Mucosa of descending colon (tissue), 3 donors: ENCODE measurements at regions of chr18 and their contacts with region 1.

Region 1: DNA sequence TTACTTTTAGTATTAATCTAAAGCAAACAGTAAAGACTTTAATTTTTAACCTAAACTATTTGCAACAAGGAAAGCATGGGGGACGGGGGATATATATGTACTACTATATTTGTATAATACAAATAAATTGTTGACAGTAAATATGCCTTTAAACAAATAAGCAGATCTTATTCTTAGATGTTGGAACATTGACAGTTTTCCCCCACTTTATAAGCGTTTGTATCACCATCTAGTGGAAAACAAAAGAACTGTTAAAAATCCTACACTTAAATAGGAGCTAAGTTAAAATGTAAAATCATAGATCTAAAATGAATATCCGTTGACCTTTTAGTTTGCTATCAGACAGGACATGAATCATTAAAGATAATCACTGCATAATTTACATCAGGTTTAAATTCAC is 50.0 kb downstream of the RBBP8 start:
- DNase-seq: no peak
- ATAC-seq: no peak
- H3K4me3 ChIP-seq: no peak overlapping the region
- H3K4me1 ChIP-seq: no peaks in the 10 kb centered on the region
- CTCF ChIP-seq: no peak

Region 2: GRCh38 chr18:22813648-22814328 is 169.4 kb before region 1 on chr18:
- intact Hi-C with region 1: loop called in 1 of 2 experiments (anchors 5 kb)
- DNase-seq: peak in 1 of 3 donors; percentile 34
- ATAC-seq: peak; percentile 70
- H3K4me3 ChIP-seq: no peak overlapping the region
- H3K4me1 ChIP-seq: peaks cover 7% of the 10 kb centered on the region
- CTCF ChIP-seq: no peak

Region 3: GRCh38 chr18:23307567-23308295 is 324.6 kb after region 1 on chr18:
- intact Hi-C with region 1: no loop called
- DNase-seq: no peak
- ATAC-seq: peak; percentile 40
- H3K4me3 ChIP-seq: no peak overlapping the region
- H3K4me1 ChIP-seq: no peaks in the 10 kb centered on the region
- CTCF ChIP-seq: no peak